Kidney (tissue), 22 donors: ENCODE measurements at regions of chr15 and their contacts with region 1.

Region 1: GRCh38 chr15:55434989-55435825 is 26.9 kb downstream of the PIERCE2 start:
- DNase-seq: peak in 2 of 5 donors; percentile 58 to 68
- H3K4me3 ChIP-seq: no peak overlapping the region
- H3K27ac ChIP-seq: no peak overlapping the region
- H3K4me1 ChIP-seq: no peaks in the 10 kb centered on the region
- H3K27me3 ChIP-seq: no peaks in the 10 kb centered on the region
- CTCF ChIP-seq: peak; percentile 34

Region 2: GRCh38 chr15:55204464-55204863 is 230.7 kb before region 1 on chr15:
- intact Hi-C with region 1: no loop called
- DNase-seq: no peak
- H3K4me3 ChIP-seq: no peak overlapping the region
- H3K27ac ChIP-seq: no peak overlapping the region
- H3K4me1 ChIP-seq: no peaks in the 10 kb centered on the region
- H3K27me3 ChIP-seq: no peaks in the 10 kb centered on the region
- CTCF ChIP-seq: no peak

Region 3: DNA sequence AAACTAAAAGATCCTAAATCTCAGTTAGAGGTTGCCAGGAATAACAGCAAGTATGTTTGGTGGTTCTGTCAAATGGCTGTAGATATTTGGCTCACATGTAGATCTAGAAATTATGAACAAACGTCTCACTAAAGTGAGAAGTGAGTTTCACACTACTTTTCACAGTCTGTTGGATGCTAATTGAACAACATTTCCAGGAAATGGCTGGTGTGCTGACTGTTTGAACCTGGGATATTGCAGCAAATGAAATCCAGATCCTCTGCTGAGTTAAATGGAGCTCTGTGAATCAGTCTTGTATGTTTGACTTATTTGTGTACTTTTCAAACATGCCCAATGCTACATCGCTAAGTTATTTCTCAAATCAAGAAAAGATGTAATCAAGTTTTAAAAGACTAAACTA is 217.2 kb before region 1 on chr15:
- intact Hi-C with region 1: loop called (anchors 5 kb)
- DNase-seq: no peak
- H3K4me3 ChIP-seq: no peak overlapping the region
- H3K27ac ChIP-seq: no peak overlapping the region
- H3K4me1 ChIP-seq: no peaks in the 10 kb centered on the region
- H3K27me3 ChIP-seq: no peaks in the 10 kb centered on the region
- CTCF ChIP-seq: no peak

Region 4: DNA sequence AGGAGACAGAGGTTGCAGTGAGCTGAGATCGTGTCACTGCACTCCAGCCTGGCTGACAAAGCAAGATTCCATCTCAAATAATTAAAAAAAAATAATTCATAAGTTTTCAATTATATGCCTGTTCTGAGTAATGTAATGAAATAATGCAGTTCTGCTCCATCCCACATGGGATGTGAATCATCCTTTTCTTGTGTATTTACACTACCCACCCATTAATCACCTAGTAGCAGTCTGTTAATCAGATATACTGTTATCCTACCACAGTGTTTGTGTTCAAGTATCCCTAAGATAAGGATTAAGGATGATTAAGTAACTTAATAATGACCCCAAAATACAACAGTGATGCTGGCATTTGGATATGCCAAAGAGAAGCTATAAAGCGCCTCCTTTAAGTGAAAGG is 77.4 kb before region 1 on chr15:
- intact Hi-C with region 1: no loop called
- DNase-seq: no peak
- H3K4me3 ChIP-seq: no peak overlapping the region
- H3K27ac ChIP-seq: no peak overlapping the region
- H3K4me1 ChIP-seq: no peaks in the 10 kb centered on the region
- H3K27me3 ChIP-seq: no peaks in the 10 kb centered on the region
- CTCF ChIP-seq: no peak

Region 5: DNA sequence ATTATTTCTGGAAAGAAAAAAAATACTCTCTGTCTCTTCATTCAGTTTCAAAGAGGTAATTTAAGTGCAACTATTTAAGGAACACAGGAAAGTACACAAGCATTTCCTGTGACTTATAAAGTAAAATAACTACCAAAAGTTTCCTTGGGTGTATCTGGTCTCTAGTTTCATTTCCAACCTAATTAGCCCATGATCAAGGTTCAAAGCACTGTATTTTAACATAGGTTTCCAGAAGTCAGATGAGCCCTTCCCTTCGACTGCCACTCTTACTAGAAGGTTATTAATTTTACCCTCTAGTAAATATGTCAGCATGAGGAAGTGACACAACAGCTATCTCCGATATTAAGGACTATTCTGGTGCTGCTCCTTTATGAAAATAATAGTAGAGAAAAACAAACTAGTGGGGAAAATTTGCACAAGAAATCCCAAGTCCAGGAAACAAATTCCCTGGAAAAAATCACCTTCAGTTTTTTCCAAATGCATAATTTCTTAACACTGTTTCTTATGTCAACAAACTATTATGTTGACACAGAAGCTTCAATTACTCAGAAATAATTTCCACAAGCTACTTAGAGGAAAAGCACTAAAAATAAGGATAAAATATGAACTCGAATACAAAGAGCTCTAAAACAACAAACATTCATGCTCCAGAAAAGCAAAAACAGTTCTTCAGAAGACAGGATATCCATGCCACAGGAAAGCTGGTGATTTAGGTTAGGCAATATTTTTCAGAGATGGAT is 62.3 kb before region 1 on chr15:
- intact Hi-C with region 1: no loop called
- DNase-seq: no peak
- H3K4me3 ChIP-seq: no peak overlapping the region
- H3K27ac ChIP-seq: peak overlapping the region in 1 of 2 donors; percentile 62
- H3K4me1 ChIP-seq: no peaks in the 10 kb centered on the region
- H3K27me3 ChIP-seq: no peaks in the 10 kb centered on the region
- CTCF ChIP-seq: no peak